Activated naive CD4-positive, alpha-beta T cell treated with anti-CD3 and anti-CD28 coated beads, Interleukin-2, amount 10 ng/mL, durations not matched to agents 7 days and 5 days (primary cell): ENCODE measurements at regions of chr12 and their contacts with region 1.

Region 1: DNA sequence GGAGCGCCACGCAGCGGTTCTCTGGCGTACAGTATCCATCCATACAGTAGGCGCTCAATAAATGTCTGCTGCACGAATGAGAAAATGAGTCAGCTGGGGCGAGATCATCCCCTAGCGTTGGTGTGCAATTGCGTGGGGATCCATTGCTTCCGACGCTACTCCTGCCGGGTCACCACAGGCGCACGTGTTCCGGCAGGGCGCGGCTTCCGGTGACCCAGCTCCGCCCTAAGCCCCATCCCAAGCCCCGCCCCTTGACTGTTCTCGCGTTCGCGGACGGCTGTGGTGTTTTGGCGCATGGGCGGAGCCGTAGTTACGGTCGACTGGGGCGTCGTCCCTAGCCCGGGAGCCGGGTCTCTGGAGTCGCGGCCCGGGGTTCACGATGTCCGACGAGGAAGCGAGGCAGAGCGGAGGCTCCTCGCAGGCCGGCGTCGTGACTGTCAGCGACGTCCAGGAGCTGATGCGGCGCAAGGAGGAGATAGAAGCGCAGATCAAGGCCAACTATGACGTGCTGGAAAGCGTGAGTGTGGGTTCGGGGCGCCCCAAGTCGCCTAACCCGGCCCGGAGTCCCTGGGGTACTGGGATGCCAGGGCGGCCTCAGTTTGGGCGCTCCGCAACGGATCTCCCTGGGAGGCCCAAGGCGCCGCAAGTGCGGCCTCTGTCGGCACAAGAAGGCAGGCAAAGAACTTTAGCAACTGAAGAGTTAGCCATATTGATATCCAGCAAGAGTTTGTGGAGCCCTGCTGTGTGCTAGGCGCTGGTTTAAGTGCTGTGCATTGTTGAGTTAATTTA is at the start of gene PSMD9:
- DNase-seq: peak; percentile 98
- H3K4me3 Mint-ChIP-seq: peak within 1 kb of the TSS; percentile 93
- H3K27ac Mint-ChIP-seq: peak within 1 kb of the TSS; percentile 99
- H3K4me1 Mint-ChIP-seq: peaks cover 45% of the 10 kb centered on the region
- H3K27me3 Mint-ChIP-seq: peaks cover 6% of the 10 kb centered on the region

Region 2: DNA sequence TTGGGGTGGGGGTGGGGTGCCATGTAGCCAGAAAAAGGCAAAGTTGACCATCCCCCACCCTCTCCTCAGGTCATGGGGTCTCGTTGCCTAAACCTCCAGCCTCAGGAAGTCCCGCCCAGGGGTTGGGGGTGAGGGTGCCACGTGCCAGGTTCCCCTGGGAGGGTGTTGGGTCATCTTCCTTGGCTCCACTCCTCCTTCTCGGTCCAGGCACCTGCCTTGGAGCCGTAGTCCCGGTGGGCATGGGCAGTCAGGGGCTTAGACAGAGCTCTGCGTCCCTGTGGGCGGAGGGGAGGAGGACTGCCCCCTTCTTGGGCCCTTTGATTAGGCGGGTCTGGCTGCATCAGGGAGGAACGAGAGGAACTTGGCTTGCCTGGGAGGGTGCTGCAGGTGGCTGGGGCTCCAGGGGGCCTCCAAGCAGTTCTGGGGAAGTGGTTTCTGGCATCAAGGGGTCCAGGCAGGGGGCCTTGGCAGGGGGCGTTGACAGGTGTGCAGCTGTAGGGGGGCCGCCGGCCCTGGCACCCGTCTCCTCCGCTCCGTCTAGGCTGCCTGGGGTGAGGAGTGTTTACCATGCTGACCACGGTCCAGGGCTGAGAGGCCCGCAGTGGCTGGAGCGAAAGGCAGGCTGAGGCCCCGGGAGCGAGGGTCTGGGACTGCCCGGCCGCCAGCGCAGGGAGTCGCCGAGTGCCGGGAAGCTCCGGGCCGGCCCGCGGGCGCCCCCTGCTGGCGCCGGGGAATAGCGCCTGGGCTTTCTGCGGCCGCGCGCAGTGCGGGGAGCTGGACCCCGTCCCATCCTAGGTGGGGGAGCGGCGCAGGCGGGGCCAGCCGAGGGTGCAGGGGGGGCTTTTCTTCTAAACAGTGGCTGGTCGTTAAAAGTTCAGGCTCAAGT is 77.0 kb before region 1 on chr12:
- CTCF ChIA-PET with region 1: interaction called, 10 read pairs
- DNase-seq: peak; percentile 74
- H3K4me3 Mint-ChIP-seq: peak overlapping the region; percentile 74
- H3K27ac Mint-ChIP-seq: peak overlapping the region; percentile 87
- H3K4me1 Mint-ChIP-seq: peaks cover 63% of the 10 kb centered on the region
- H3K27me3 Mint-ChIP-seq: no peaks in the 10 kb centered on the region